HepG2 (cell line): ENCODE measurements at regions of chr4 and their contacts with region 1.

Region 1: DNA sequence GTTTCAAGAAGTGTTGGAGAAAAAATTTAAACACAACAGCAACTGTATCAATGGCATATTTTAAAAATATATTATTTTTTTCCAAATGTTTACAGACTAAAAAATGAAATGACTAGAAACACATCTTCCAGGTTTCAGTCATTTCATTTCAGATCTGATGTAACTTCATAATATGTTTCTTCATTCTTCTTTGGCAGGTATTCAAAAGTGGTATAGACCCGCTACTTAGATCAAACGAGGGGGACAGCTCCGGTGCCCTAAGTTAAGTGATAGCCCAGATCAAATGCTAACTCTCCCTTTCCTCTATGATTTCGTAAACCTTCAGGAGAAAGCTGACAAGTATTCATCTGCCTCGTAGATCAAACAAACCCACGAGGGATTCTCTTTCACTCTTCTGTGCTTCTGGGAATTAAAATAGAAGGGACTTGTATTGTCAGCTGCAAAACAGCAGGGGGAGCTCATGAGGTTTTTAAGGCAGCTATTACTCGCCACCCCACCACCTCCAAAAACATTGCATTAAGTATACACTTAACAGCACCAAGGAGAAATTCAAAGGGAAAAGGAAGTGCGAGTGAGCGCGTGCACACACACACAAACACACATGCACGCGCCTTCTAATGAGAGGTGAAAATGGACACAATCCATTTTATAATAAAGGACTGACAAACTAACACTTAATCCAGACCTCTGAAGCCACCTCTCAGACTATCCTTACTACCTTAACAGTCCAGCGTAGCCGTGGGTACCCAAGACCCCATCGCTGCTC is 21.4 kb downstream of the HELT start:
- DNase-seq: peak; percentile 30
- ATAC-seq: peak; percentile 77
- H3K4me3 ChIP-seq: 0 out of 6 replicates have a peak overlapping the region, but pooled peaks of 1 of the 3 experiments have one; percentile 15
- H3K27ac ChIP-seq: no peak overlapping the region
- H3K4me1 ChIP-seq: 0 out of 2 replicates have a peak, but pooled peaks cover 6% of the 10 kb centered on the region
- H3K27me3 ChIP-seq: peaks cover 0 to 15% of the 10 kb centered on the region in 2 experiments; a peak in 1 of 5 replicates
- CTCF ChIP-seq: peak; percentile 74
- EP300 ChIP-seq: no peak
- POLR2A ChIP-seq: no peak
- RAD21 ChIP-seq: peak; percentile 37; the same call in 1 of the 2 replicates

Region 2: DNA sequence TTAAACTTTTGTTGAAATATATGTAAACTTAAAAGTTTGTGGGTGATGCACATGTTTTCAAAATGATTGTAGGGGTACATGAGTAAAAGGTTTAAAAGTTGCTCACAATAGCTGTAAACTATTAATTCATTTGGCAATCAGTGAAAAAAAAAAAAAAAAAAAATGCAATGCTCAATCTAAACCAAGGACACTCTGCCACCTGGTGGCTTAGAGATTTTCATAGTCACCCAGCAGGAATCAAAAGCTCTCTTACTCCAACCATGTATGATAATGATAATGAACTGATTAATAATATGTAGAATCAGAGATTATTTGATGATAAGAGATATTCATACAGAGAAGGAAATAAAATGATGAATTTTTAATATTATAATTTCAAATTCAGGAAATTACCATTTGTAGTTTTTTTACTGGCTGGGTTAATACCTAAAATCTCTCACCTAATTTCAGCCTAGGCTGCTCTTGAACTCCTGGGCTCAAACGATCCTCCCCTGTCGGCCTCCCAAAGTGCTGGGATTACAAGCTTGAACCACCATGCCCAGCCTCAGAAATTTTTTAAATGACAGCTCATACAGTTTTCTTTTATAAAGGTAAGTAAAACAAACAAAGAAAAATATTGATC is 56.5 kb after region 1 on chr4:
- CTCF ChIA-PET with region 1: interaction called, 19 read pairs
- POLR2A ChIA-PET with region 1: interaction called, 5 read pairs
- in situ Hi-C with region 1: no loop called
- intact Hi-C with region 1: loop called (anchors 1 kb)
- DNase-seq: peak; percentile 25
- ATAC-seq: no peak
- H3K4me3 ChIP-seq: no peak overlapping the region
- H3K27ac ChIP-seq: no peak overlapping the region
- H3K4me1 ChIP-seq: no peaks in the 10 kb centered on the region
- H3K27me3 ChIP-seq: peaks cover 0 to 12% of the 10 kb centered on the region in 2 experiments; a peak in 2 of 5 replicates
- CTCF ChIP-seq: peak; percentile 50
- EP300 ChIP-seq: no peak
- POLR2A ChIP-seq: no peak
- RAD21 ChIP-seq: no peak

Region 3: DNA sequence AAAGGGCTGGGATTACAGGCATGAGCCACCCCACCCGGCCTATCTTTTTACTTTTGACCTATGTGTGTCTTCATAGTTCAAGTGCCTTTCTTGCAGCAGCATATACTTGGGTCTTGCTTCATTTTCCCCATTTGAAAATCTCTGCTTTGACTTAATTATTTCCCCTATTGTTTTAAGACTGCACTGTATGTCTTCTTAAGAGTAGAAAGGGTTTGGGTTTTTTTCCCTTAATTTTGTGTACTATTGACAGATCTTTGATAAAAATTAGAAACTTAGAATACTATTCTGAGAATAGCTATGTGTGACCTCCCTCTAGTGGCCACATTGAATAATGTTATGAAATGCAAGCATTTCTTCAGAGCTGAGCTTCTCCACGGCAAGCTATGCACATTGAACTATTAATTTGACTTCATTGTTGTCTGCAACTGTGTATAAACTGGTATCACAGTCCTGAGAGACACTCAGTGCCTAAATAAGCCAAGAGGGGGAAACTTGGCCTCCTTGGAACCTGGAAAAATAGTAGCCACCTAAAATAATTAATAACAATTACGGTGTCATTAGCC is 94.7 kb after region 1 on chr4:
- CTCF ChIA-PET with region 1: interaction called, 32 read pairs
- POLR2A ChIA-PET with region 1: no interaction called
- in situ Hi-C with region 1: loop called (anchors 5 kb)
- intact Hi-C with region 1: loop called (anchors 1 kb)
- DNase-seq: peak; percentile 42
- ATAC-seq: peak; percentile 77
- H3K4me3 ChIP-seq: no peak overlapping the region
- H3K27ac ChIP-seq: no peak overlapping the region
- H3K4me1 ChIP-seq: no peaks in the 10 kb centered on the region
- H3K27me3 ChIP-seq: peaks cover 0 to 6% of the 10 kb centered on the region in 2 experiments; a peak in 3 of 5 replicates
- CTCF ChIP-seq: peak; percentile 69
- EP300 ChIP-seq: no peak
- POLR2A ChIP-seq: no peak
- RAD21 ChIP-seq: peak; percentile 46; the same call in 1 of the 2 replicates

Region 4: GRCh38 chr4:186037692-186038658 is 998.3 kb after region 1 on chr4:
- CTCF ChIA-PET with region 1: no interaction called
- POLR2A ChIA-PET with region 1: no interaction called
- in situ Hi-C with region 1: loop called (anchors 25 kb)
- intact Hi-C with region 1: no loop called
- DNase-seq: peak; percentile 59
- ATAC-seq: peak; percentile 73
- H3K4me3 ChIP-seq: no peak overlapping the region
- H3K27ac ChIP-seq: no peak overlapping the region
- H3K4me1 ChIP-seq: peaks cover 12% of the 10 kb centered on the region; the same call in 1 of the 2 replicates
- H3K27me3 ChIP-seq: peaks cover 1 to 17% of the 10 kb centered on the region in 2 experiments; a peak in 4 of 5 replicates
- CTCF ChIP-seq: peak; percentile 88
- EP300 ChIP-seq: no peak
- POLR2A ChIP-seq: no peak
- RAD21 ChIP-seq: peak; percentile 77